Activated CD8-positive, alpha-beta T cell treated with anti-CD3 and anti-CD28 coated beads for 36 hours (primary cell): ENCODE measurements at regions of chr19 and their contacts with region 1.

Region 1: DNA sequence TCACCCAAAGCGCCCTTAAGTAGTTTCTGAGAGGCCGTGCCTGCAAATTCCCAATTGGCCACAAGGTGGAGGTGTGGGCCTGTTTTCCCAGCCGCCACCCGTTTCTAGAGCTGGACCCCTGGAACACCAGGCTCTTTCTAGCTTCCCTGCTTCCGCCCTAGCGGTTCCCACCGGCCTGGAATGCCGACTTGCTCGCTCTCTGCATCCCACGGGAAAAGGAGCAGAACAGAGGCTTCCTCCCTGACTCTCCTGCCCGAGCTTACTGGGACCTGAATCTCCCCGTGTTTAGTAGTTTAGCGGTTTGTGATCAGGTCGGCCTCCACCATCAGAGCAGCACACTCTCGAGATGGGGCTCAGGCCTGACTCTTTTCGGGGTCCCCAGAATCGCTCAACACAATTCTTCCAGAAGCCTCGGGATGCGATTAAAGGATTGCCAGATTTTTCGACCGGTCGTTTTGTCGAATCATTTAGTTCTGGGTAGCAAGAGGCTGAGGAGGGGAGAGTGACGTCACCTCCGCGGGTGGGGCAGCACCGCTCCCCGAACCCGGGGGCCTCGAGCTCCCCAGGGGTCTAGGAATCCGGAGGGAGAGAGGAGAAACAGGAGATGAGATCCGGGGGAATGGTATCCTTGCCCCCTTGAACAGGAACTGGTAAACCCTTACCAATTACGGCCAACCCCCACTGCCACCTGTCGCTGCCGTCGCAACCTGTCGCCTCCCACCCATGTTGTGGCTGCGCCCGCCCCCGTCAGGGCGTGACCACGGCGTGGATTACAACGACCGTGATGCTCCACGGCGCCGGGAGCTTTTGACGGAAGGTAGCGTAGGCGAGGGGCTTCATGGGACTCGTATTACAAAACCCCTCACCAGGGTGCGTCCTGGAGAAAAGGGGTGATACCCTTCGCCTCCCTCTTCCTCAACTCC is 8.0 kb downstream of the NAPSA start:
- DNase-seq: peak; percentile 90
- ATAC-seq: peak; percentile 71
- H3K4me3 Mint-ChIP-seq: peak overlapping the region; percentile 80
- H3K27ac Mint-ChIP-seq: peak overlapping the region; percentile 96
- H3K4me1 Mint-ChIP-seq: peaks cover 50% of the 10 kb centered on the region
- H3K27me3 Mint-ChIP-seq: peaks cover 2% of the 10 kb centered on the region
- CTCF ChIP-seq: peak; percentile 93

Region 2: DNA sequence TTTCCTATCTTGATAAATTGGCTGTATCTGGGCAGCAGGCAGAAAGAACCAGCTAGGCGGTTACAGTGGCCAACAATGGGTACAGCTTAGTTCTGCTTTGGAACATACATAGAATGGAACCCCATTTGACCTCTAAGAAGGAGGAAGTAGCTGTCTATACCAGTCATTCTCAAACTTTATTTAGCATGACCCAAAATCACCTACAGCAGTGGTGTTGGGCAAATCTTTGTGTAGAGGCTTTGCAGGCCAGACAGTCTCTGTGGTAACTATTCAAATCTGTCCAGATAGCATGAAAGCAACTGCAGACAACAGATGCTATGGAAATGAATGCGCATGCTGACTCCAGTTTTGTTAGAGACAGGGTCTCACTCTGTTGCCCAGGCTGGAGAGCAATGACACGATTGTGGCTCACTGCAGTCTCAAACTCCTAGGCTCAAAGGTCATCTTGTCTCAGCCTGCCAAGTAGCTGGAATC is 16.3 kb before region 1 on chr19:
- CTCF ChIA-PET with region 1: interaction called, 12 read pairs
- POLR2A ChIA-PET with region 1: no interaction called
- intact Hi-C with region 1: no loop called
- DNase-seq: no peak
- ATAC-seq: peak; percentile 27
- H3K4me3 Mint-ChIP-seq: no peak overlapping the region
- H3K27ac Mint-ChIP-seq: no peak overlapping the region
- H3K4me1 Mint-ChIP-seq: peaks cover 4% of the 10 kb centered on the region
- H3K27me3 Mint-ChIP-seq: peaks cover 6% of the 10 kb centered on the region
- CTCF ChIP-seq: no peak

Region 3: DNA sequence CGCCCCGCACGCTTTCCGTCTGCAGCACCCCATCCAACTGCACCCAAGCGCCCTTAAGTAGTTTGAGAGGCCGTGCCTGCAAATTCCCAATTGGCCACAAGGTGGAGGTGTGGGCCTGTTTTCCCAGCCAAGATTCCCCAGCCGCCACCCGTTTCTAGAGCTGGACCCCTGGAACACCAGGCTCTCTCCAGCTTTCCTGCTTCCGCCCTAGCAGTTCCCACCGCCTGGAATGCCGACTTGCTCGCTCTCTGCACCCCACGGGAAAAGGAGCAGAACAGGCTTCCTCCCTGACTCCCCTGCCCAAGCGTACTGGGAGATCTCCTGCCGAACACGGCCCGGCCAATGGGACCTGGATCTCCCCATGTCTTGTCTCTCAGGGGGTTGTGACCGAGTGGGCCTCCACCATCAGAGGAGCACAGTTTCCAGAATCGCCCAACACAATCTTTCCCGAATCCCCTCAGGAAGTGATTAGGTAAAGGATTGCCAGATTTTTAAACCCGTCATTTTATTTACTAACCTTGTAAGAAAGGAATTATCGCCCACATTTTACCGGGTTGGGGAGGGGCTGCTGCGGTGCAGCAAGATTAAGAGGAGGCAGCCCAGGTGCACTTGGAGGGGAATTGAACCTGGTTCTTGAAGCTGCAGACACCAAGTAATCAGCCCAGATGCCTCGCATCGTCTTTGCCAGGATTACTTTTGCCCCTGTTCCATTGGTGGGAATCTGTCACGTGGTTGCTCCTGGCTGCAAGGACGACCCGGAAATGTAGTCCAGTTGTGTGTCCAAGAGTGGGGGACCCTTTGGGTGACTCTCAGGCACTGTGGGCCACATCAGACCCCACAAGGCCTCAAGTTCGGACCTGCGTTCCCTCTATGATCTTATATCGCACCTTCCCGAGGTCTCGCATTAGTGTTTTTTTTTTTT is 11.5 kb after region 1 on chr19:
- CTCF ChIA-PET with region 1: interaction called, 18 read pairs
- POLR2A ChIA-PET with region 1: interaction called, 4 read pairs
- intact Hi-C with region 1: no loop called
- DNase-seq: peak; percentile 88
- ATAC-seq: peak; percentile 66
- H3K4me3 Mint-ChIP-seq: peak overlapping the region; percentile 87
- H3K27ac Mint-ChIP-seq: peak overlapping the region; percentile 81
- H3K4me1 Mint-ChIP-seq: peaks cover 37% of the 10 kb centered on the region
- H3K27me3 Mint-ChIP-seq: no peaks in the 10 kb centered on the region
- CTCF ChIP-seq: peak; percentile 90

Region 4: GRCh38 chr19:50376166-50377050 is 19.0 kb after region 1 on chr19 and contains the start of gene NR1H2:
- CTCF ChIA-PET with region 1: interaction called, 15 read pairs
- POLR2A ChIA-PET with region 1: interaction called, 8 read pairs
- intact Hi-C with region 1: no loop called
- DNase-seq: peak; percentile 96
- ATAC-seq: peak; percentile 86
- H3K4me3 Mint-ChIP-seq: peak within 1 kb of the TSS; percentile 98
- H3K27ac Mint-ChIP-seq: peak within 1 kb of the TSS; percentile 99
- H3K4me1 Mint-ChIP-seq: peaks cover 25% of the 10 kb centered on the region
- H3K27me3 Mint-ChIP-seq: no peaks in the 10 kb centered on the region
- CTCF ChIP-seq: no peak
- total RNA-seq, gene NR1H2: 50.9 to 52.3 TPM

Region 5: GRCh38 chr19:50383852-50384684 is 26.6 kb after region 1 on chr19 and contains the start of gene POLD1:
- CTCF ChIA-PET with region 1: interaction called, 10 read pairs
- POLR2A ChIA-PET with region 1: interaction called, 7 read pairs
- intact Hi-C with region 1: no loop called
- DNase-seq: peak; percentile 99
- ATAC-seq: peak; percentile 95
- H3K4me3 Mint-ChIP-seq: peak within 1 kb of the TSS; percentile 94
- H3K27ac Mint-ChIP-seq: peak within 1 kb of the TSS; percentile 95
- H3K4me1 Mint-ChIP-seq: peaks cover 32% of the 10 kb centered on the region
- H3K27me3 Mint-ChIP-seq: no peaks in the 10 kb centered on the region
- CTCF ChIP-seq: no peak
- total RNA-seq, gene POLD1: 214 to 215 TPM

Region 6: DNA sequence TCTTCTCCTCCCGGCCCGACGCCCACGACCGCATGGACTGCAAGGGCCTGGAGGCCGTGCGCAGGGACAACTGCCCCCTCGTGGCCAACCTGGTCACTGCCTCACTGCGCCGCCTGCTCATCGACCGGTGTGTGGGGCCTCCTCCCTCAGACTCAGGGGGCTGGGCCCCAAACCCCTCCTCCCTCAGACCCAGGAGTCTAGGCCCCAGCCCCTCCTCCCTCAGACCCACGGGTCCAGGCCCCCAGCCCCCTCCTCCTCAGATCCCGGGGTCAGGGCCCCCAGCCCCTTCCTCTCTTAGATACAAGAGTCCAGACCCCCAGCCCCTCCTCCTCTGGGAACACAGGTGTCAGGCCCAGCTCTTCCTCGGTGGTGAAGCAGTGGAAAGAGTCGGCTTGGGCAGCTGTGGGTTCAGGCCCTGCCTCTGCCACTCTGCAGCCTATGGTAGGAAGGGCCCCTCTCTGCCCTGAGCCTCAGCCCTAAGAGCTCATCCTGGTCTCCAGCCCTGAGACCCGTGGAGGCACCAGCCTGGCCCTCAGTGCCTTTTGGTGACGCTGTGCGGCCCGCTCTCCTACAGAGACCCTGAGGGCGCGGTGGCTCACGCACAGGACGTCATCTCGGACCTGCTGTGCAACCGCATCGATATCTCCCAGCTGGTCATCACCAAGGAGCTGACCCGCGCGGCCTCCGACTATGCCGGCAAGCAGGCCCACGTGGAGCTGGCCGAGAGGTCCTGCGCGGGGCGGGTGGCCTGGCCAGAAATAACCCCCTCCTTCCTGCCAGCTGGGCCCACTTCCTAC is 57.6 kb after region 1 on chr19:
- CTCF ChIA-PET with region 1: interaction called, 13 read pairs
- POLR2A ChIA-PET with region 1: interaction called, 3 read pairs
- intact Hi-C with region 1: loop called (anchors 10 kb)
- DNase-seq: peak; percentile 83
- ATAC-seq: peak; percentile 78
- H3K4me3 Mint-ChIP-seq: no peak overlapping the region
- H3K27ac Mint-ChIP-seq: no peak overlapping the region
- H3K4me1 Mint-ChIP-seq: peaks cover 13% of the 10 kb centered on the region
- H3K27me3 Mint-ChIP-seq: peaks cover 10% of the 10 kb centered on the region
- CTCF ChIP-seq: peak; percentile 79

Region 7: GRCh38 chr19:50461066-50461875 is 103.8 kb after region 1 on chr19:
- CTCF ChIA-PET with region 1: interaction called, 42 read pairs
- POLR2A ChIA-PET with region 1: no interaction called
- intact Hi-C with region 1: loop called (anchors 1 kb)
- DNase-seq: peak; percentile 80
- ATAC-seq: peak; percentile 88
- H3K4me3 Mint-ChIP-seq: no peak overlapping the region
- H3K27ac Mint-ChIP-seq: no peak overlapping the region
- H3K4me1 Mint-ChIP-seq: peaks cover 15% of the 10 kb centered on the region
- H3K27me3 Mint-ChIP-seq: peaks cover 28% of the 10 kb centered on the region
- CTCF ChIP-seq: peak; percentile 86